Mammary epithelial cell (primary cell): ENCODE measurements at regions of chr4 and their contacts with region 1.

Region 1: DNA sequence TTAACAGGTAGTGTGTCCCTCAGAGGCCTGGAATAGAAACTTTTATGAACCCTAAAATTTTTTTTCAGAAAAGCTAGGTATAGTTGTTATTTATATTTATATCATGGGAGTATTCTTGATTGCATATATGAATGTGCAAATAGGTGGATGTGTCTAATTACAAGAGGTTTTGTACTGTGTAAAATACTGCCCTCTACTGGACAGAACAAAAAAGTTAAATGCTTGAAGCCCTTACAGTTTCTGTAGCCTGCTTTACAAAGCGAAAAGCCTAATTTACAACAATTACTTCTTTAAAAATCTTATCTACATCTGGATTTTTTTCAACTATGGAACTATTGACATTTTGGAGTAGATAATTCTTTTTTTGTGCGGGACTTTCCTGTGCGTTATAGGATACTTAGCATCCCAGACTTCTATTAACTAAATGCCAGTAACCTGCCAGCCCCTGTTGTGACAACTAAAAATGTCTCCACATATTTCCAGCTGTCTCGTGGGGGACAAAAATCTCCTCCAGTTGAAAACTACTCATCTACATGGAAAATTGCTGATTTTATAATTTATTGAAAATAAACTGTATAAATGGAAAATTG is 35.1 kb downstream of the ENPEP start:
- DNase-seq: peak; percentile 45
- H3K4me3 ChIP-seq: no peak overlapping the region
- H3K27ac ChIP-seq: no peak overlapping the region
- H3K4me1 ChIP-seq: peaks cover 3% of the 10 kb centered on the region
- H3K27me3 ChIP-seq: peaks cover 3% of the 10 kb centered on the region
- CTCF ChIP-seq: peak; percentile 57 to 63

Region 2: DNA sequence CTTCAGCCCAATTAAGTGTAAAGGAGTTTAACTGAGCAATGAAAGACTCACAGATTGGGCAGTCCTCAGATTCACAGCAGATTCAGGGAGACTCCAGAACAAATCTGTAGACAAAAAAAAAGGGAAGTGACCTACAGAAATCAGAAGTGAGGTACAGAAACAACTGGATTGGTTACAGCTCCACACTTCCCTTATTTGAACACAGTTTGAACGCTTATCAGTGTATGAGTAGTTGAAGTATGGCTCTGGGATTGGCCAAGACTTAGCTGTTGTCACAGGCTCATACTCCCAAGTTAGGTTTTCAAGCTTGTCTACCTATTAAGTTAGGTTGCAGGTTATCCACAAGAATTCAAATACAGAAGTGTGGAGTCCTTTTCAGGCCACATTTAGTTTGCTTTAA is 200.3 kb before region 1 on chr4:
- CTCF ChIA-PET with region 1: interaction called, 6 read pairs
- dilution Hi-C with region 1: no loop called
- in situ Hi-C with region 1: loop called (anchors 10 to 25 kb)
- intact Hi-C with region 1: loop called (anchors 1 kb)
- DNase-seq: no peak
- H3K4me3 ChIP-seq: no peak overlapping the region
- H3K27ac ChIP-seq: no peak overlapping the region
- H3K4me1 ChIP-seq: no peaks in the 10 kb centered on the region
- H3K27me3 ChIP-seq: peaks cover 3% of the 10 kb centered on the region
- CTCF ChIP-seq: no peak

Region 3: DNA sequence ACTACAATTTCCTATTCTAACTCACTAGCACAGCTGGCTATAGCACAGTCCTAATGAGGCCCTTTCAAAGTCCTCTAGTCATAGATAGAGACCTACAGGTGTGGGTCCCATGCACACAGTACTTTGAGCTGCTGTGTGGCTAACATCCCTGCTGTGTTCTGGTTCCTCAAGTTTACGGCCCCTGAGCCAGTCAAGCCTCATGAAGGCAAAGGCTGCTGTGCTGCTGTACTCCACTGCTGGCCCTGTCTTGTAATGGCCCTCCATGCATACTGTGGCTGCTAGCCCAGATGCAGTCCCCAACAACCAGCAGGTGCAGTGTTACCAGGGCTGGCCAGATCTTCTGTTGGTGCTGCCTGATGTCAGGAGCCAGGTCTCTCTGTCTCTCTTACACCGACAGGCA is 58.5 kb before region 1 on chr4:
- CTCF ChIA-PET with region 1: no interaction called
- dilution Hi-C with region 1: no loop called
- in situ Hi-C with region 1: no loop called
- intact Hi-C with region 1: no loop called
- DNase-seq: no peak
- H3K4me3 ChIP-seq: no peak overlapping the region
- H3K27ac ChIP-seq: no peak overlapping the region
- H3K4me1 ChIP-seq: no peaks in the 10 kb centered on the region
- H3K27me3 ChIP-seq: no peaks in the 10 kb centered on the region
- CTCF ChIP-seq: no peak

Region 4: DNA sequence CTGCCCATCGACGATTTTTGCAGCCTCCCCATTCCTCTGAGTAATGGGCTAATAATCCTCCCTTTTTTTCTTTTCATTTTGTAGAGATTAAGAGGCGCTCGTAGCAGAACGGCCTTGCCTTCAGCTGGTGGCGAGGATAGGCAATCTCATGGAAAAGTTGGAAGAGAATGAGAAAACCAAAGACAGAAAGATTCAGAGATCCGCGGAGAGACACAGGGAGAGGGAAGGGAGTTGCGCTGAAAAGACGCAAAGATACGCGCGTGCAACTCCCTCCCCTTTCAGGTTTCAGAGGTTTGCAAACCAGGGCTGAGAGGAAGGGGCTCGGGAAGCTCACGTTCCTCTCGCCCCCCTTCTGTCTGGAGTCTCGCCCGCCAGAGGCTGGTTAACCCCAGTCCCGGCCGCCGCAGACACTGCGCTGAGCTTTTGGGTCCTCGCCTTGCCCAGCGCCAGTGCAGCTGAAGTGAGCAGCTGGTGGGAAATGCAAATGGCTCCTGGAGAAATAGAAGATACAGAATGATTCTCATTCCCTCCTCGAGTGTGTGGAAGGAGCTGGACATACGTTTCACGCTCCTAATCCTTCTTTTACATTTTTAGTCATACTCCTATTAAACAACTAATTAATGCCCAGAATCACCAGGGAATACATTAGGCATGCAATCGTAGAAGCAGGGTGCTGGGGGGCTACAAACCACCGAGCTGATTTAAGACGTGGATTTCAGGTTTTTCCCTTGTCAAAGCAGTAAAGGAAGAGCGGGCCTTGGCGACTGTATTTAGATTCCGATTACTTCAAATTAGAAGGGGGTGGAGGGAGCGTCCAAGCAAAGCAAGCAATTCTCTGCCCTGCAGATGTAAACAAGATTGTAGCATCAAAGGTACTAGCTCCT is 128.4 kb after region 1 on chr4:
- CTCF ChIA-PET with region 1: no interaction called
- dilution Hi-C with region 1: no loop called
- in situ Hi-C with region 1: no loop called
- intact Hi-C with region 1: no loop called
- DNase-seq: no peak
- H3K4me3 ChIP-seq: no peak overlapping the region
- H3K27ac ChIP-seq: no peak overlapping the region
- H3K4me1 ChIP-seq: peaks cover 5% of the 10 kb centered on the region
- H3K27me3 ChIP-seq: peaks cover 64% of the 10 kb centered on the region
- CTCF ChIP-seq: no peak